SK-N-SH (cell line): ENCODE measurements at regions of chr11 and their contacts with region 1.

Region 1: DNA sequence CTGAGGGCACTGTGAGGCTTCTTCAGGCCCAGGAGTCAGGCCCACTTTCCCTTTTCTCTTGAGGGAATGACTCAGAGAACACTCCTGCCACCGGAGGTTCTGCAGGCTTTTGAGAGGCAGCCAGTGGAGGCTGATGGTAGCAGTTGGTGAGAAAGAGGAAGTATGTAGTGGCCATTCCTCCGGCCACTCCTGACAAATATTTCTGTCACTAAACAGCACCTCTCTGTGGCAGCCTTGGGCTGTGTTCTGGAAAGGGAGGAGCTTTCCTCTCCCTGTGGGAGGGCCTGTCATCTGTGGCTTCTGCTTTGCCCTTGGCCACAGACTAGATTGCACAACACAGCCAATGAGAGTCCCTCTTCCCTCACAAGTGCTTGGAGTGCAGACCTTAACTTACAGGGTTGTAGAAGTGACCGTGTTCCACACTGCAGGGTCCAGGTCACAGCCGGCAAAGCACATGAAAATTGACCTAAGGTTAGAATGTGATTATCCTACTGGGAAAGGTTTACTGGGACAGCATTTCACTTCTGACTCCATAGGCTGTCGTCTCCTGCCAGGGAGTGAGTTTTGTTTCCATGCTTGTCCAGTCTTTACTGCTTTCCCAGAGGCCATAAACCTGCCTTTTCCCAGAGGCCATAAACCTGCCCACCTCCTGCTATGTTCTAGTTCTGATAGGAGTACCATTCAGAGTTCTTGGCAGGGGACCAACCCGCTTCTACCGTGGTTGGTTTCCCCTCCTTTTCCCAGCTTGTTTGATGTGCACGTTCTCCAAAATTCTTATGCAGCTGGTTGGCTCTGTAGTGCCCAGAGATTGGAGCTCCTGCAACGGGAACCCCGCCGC is 33.3 kb downstream of the MARK2 start:
- DNase-seq: peak; percentile 80
- H3K4me3 ChIP-seq: no peak overlapping the region
- H3K27ac ChIP-seq: peak overlapping the region; percentile 25 to 65; a peak in 3 of 4 replicates
- H3K4me1 ChIP-seq: peaks cover 16 to 34% of the 10 kb centered on the region in 2 experiments; a peak in 3 of 4 replicates
- H3K27me3 ChIP-seq: no peaks in the 10 kb centered on the region
- CTCF ChIP-seq: peak; percentile 53
- EP300 ChIP-seq: no peak
- RAD21 ChIP-seq: peak; percentile 71

Region 2: GRCh38 chr11:63882555-63883242 is 10.5 kb after region 1 on chr11:
- CTCF ChIA-PET with region 1: interaction called, 13 read pairs
- POLR2A ChIA-PET with region 1: no interaction called
- DNase-seq: peak; percentile 79
- H3K4me3 ChIP-seq: no peak overlapping the region
- H3K27ac ChIP-seq: peak overlapping the region in 1 of 2 experiments; percentile 39; a peak in 2 of 4 replicates
- H3K4me1 ChIP-seq: peaks cover 10 to 20% of the 10 kb centered on the region in 2 experiments; a peak in 3 of 4 replicates
- H3K27me3 ChIP-seq: no peaks in the 10 kb centered on the region
- CTCF ChIP-seq: no peak
- EP300 ChIP-seq: peak in 1 of 2 experiments; percentile 30; a peak in 1 of 4 replicates
- RAD21 ChIP-seq: no peak

Region 3: GRCh38 chr11:63938479-63939396 is 66.6 kb after region 1 on chr11 and contains the start of gene NAA40:
- CTCF ChIA-PET with region 1: no interaction called
- POLR2A ChIA-PET with region 1: no interaction called
- DNase-seq: peak; percentile 99
- H3K4me3 ChIP-seq: peak within 1 kb of the TSS; percentile 69 to 79
- H3K27ac ChIP-seq: peak within 1 kb of the TSS; percentile 67 to 82
- H3K4me1 ChIP-seq: peaks cover 12% of the 10 kb centered on the region in 2 experiments; a peak in 2 of 4 replicates
- H3K27me3 ChIP-seq: no peaks in the 10 kb centered on the region
- CTCF ChIP-seq: no peak
- EP300 ChIP-seq: no peak; a peak in 1 of 4 replicates
- RAD21 ChIP-seq: no peak; the same call in 1 of the 2 replicates
- polyA plus RNA-seq, gene NAA40: 33.0 and 36.3 TPM in 2 replicates